ENCODE measurements at regions of chr5 and their contacts with region 1.

Region 1: DNA sequence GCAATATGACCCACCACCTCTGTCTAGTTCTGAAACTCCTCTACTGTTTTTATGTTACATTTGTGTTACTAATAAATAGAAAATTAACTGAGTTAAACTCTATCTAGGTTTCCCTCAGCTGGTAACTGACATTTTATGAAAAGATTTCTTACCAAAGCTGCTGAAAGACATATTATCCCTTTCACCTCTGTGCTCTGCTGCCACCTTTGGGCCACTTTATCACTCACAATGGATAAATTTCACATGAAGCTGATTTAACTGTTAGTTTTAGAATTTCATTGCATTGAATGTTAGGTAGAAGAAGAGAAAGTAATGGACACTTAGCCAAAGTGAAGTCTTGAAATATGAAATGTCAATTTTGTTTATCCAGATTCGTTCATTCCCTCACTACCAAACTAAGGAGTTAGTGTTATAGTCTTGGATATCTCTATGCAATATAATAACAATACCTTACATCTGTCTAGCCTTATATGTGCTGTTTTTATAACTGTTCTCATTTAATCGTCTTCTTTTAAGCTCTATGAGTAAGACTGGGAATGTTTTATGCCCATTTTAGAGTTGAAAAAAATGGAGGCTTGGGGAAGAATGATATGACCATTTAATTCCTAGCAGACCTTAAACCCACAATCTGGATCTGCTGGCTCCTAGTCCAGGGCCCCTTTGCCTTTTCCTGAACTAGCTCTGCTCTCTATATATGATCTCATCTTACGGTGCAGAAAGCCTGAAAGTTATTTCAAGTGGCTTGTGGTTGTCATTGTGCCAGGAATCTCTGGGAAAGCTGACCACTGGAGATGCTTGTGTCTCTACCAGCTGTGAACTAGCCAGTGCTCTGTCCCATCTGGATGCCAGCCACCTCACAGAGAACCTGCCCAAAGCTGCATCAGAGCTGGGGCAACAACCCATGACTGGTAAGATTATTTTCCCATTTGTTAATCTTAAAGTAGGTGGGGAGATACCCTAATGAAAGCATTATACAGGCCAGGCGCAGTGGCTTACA is 97.1 kb downstream of the GOLPH3 start:
- DNase-seq: peak; percentile 71
- H3K4me3 Mint-ChIP-seq: no peak overlapping the region
- H3K27ac Mint-ChIP-seq: no peak overlapping the region
- H3K4me1 Mint-ChIP-seq: no peaks in the 10 kb centered on the region
- H3K27me3 Mint-ChIP-seq: no peaks in the 10 kb centered on the region

Region 2: DNA sequence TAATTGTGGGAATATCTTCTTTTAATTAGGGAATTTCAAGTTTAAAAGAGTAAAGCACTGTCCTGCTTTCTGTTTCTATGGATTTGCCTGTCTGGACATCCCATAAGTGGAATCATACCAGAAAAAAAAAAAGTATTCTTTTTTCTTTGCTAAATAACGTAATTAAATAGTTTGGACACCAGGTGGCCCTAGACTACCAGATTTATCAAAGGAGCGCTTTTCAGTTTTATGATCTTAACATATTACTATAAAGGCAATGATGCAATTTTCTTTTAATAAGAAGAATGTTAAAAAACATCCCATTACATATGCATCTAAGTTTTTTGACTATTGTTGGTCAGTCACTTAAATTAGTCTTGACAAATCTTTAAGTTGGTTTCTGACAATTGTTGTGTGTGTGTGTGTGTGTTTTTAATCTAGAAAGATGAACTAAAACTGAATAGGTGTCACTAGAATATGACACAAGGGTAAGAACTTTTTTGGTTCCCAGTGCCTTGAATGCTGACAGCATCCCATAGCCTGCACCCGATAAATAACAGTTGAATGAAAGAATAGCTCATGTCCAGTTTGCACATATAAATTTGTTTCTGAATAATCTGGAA is 495.4 kb before region 1 on chr5:
- CTCF ChIA-PET with region 1: interaction called, 6 read pairs
- intact Hi-C with region 1: loop called (anchors 1 kb)
- DNase-seq: peak; percentile 8
- H3K4me3 Mint-ChIP-seq: no peak overlapping the region
- H3K27ac Mint-ChIP-seq: no peak overlapping the region
- H3K4me1 Mint-ChIP-seq: no peaks in the 10 kb centered on the region
- H3K27me3 Mint-ChIP-seq: peaks cover 9% of the 10 kb centered on the region

Region 3: GRCh38 chr5:31854181-31855133 is 222.5 kb before region 1 on chr5:
- CTCF ChIA-PET with region 1: interaction called, 4 read pairs
- intact Hi-C with region 1: loop called (anchors 1 kb)
- DNase-seq: peak; percentile 63
- H3K4me3 Mint-ChIP-seq: peak overlapping the region; percentile 79
- H3K27ac Mint-ChIP-seq: no peak overlapping the region
- H3K4me1 Mint-ChIP-seq: peaks cover 15% of the 10 kb centered on the region
- H3K27me3 Mint-ChIP-seq: peaks cover 20% of the 10 kb centered on the region

Region 4: DNA sequence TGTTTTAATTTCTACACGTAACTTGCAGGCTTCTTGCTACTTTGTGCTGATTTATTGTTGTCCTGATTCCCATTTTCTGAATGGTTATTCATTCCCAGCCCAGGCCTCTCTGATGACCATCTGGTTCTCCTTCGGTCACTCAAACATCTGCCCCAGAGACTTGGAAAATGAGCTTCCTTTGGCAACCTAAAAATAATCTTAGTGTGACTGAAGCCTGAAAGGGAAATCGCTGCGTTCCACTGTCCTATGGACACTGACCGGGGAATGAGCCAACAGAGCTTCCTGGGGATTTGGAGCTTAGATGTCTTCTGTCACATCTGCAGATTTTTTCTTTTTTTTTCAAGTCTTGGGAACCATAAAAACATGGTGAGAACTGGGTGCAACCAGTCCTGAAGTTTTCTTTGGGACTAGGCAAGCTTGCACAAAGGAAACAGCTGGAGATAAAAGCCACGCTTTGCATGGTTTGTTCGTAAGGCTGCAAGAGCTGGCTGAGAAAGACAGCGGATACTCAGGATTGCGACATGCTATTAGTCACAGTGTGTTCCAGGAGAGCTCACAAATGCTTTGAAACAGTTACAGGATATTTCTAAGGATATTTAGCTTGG is 49.2 kb before region 1 on chr5:
- CTCF ChIA-PET with region 1: interaction called, 3 read pairs
- intact Hi-C with region 1: loop called (anchors 2 kb)
- DNase-seq: no peak
- H3K4me3 Mint-ChIP-seq: no peak overlapping the region
- H3K27ac Mint-ChIP-seq: no peak overlapping the region
- H3K4me1 Mint-ChIP-seq: peaks cover 6% of the 10 kb centered on the region
- H3K27me3 Mint-ChIP-seq: no peaks in the 10 kb centered on the region

Region 5: GRCh38 chr5:32329308-32329834 is 252.4 kb after region 1 on chr5:
- CTCF ChIA-PET with region 1: interaction called, 3 read pairs
- intact Hi-C with region 1: loop called (anchors 10 kb)
- DNase-seq: peak; percentile 75
- H3K4me3 Mint-ChIP-seq: no peak overlapping the region
- H3K27ac Mint-ChIP-seq: no peak overlapping the region
- H3K4me1 Mint-ChIP-seq: no peaks in the 10 kb centered on the region
- H3K27me3 Mint-ChIP-seq: no peaks in the 10 kb centered on the region